GM12878 (cell line): ENCODE measurements at regions of chr11 and their contacts with region 1.

Region 1: DNA sequence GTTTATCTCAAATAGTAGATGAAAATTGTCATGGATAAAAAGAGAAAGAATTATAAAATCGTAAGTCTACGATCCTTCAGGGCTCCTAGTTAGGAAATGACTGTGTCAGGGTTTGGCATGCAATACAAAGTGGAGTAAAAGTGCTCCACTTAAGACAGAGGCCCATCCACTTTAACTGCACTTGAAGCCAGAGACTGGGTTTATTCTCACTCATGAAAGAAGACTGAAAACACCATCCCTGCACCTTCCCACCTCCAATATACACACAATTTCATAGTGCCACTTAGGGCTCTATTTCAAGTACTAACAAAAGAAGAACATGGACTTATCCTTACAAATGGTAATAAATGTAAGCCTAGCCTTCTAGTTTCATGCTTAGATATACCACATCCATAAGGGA is 70.7 kb downstream of the ANO5 start:
- DNase-seq: no peak
- ATAC-seq: no peak
- H3K4me3 ChIP-seq: no peak overlapping the region
- H3K27ac ChIP-seq: no peak overlapping the region
- H3K4me1 ChIP-seq: no peaks in the 10 kb centered on the region
- H3K27me3 ChIP-seq: no peaks in the 10 kb centered on the region
- CTCF ChIP-seq: no peak
- EP300 ChIP-seq: no peak
- POLR2A ChIP-seq: no peak
- RAD21 ChIP-seq: no peak

Region 2: GRCh38 chr11:22304337-22304961 is 40.8 kb after region 1 on chr11:
- CTCF ChIA-PET with region 1: interaction called, 10 read pairs
- POLR2A ChIA-PET with region 1: no interaction called
- RAD21 ChIA-PET with region 1: no interaction called
- SMC1A ChIA-PET with region 1: interaction called, 3 read pairs
- in situ Hi-C with region 1: no loop called
- intact Hi-C with region 1: no loop called
- DNase-seq: no peak
- ATAC-seq: peak; percentile 66
- H3K4me3 ChIP-seq: no peak overlapping the region
- H3K27ac ChIP-seq: no peak overlapping the region
- H3K4me1 ChIP-seq: no peaks in the 10 kb centered on the region
- H3K27me3 ChIP-seq: no peaks in the 10 kb centered on the region
- CTCF ChIP-seq: peak; percentile 40 to 64 (median 48); a peak in 5 of 6 replicates
- EP300 ChIP-seq: no peak
- POLR2A ChIP-seq: no peak
- RAD21 ChIP-seq: peak; percentile 73